ENCODE measurements at regions of chr3 and their contacts with region 1.

Region 1: DNA sequence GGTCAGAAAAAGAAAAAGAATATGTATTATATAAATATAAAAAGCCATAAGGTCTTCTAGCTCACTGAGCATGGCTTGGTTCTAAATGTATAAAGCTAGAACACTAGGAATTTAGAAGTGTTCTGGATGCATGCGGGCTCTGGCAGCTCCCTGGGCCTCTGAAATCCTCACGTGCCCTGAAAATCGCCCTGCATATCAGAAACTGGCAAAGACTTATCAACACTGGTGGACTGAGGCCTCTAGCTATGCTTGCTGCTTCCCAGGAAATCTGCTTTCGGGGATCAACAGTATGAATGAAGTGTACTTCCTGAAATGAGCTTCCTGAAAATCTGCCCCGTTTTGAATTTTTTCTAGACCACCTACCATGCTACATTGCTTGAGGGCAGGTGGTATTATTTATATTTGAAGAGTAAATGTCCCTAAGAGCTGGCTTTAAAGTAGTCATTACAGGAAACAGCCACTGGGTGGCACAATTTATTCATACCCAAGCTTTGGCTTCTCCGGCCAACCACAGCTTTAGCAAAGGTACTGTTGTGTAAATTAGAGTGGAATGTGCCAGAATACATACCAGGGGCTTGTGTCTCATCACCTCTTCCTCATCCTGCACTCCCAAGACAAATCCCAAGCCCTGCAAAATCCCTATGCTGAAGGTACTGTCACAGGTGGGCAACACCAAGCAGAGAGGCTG is 17.7 kb downstream of the CRTAP start:
- DNase-seq: no peak
- H3K4me3 ChIP-seq: no peak overlapping the region
- H3K27ac ChIP-seq: no peak overlapping the region
- H3K4me1 ChIP-seq: peaks cover 0 to 6% (median 0%) of the 10 kb centered on the region in 6 donors
- H3K27me3 ChIP-seq: no peaks in the 10 kb centered on the region
- CTCF ChIP-seq: peak in 10 of 11 experiments; percentile 35 to 80 (median 69)
- POLR2A ChIP-seq: no peak

Region 2: GRCh38 chr3:33287672-33288282 is 156.3 kb after region 1 on chr3:
- intact Hi-C with region 1: no loop called
- DNase-seq: no peak
- H3K4me3 ChIP-seq: no peak overlapping the region
- H3K27ac ChIP-seq: no peak overlapping the region
- H3K4me1 ChIP-seq: no peaks in the 10 kb centered on the region
- H3K27me3 ChIP-seq: peaks cover 0 to 10% (median 0%) of the 10 kb centered on the region in 7 donors
- CTCF ChIP-seq: no peak
- POLR2A ChIP-seq: no peak

Region 3: DNA sequence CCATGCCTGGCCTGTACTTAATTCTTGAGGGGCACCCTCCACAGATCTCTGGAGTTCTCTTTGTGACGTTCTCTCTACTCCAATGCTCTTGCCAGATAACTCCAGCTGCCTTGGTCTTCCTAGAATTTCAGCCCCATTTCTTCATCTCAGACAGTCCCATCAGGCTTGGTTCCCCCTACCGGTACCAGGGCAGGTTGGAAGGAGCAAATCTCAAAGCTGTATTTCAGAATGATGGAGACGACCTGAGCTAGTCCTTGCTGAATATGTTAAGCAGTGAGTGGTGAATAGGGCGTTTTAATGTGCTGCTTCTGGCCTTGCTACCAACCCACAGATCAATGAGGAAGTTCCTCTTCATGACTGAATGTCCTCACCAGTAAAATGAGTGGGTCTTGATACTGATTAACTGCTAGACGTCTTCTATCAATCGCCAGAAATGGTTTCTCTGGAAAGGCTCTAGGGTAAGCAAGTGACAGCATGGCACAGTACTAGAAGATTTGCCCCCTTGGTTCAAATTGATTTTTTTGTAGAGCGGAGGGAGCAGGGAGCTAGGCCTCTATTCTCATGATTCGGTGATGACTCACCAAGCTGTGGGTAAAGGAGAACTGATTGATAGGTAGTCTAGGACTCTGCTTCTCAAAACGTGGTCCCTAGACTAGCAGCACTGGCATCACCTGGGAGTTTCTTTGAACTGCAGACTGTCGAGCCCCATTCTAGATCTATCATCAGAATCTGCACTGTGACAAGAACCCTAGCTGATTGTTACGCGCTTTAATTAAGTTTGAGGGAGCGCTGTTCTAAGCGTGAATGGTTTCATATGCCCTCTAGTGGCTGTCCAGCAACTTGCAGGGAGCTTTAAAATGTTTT is 241.0 kb after region 1 on chr3:
- intact Hi-C with region 1: loop called (anchors 5 kb)
- DNase-seq: no peak
- H3K4me3 ChIP-seq: peak overlapping the region in 1 of 8 donors; percentile 19
- H3K27ac ChIP-seq: no peak overlapping the region
- H3K4me1 ChIP-seq: peaks cover 0 to 9% (median 6%) of the 10 kb centered on the region in 6 donors
- H3K27me3 ChIP-seq: no peaks in the 10 kb centered on the region
- CTCF ChIP-seq: peak; percentile 65 to 86 (median 80)
- POLR2A ChIP-seq: no peak

Region 4: GRCh38 chr3:33787328-33788009 is 656.0 kb after region 1 on chr3:
- intact Hi-C with region 1: loop called (anchors 10 kb)
- DNase-seq: no peak
- H3K4me3 ChIP-seq: peak overlapping the region in 2 of 8 donors; percentile 13 to 45
- H3K27ac ChIP-seq: no peak overlapping the region
- H3K4me1 ChIP-seq: peaks cover 0 to 12% (median 4%) of the 10 kb centered on the region in 6 donors
- H3K27me3 ChIP-seq: peaks cover 0 to 13% (median 0%) of the 10 kb centered on the region in 7 donors
- CTCF ChIP-seq: peak in 10 of 11 experiments; percentile 52 to 81 (median 74)
- POLR2A ChIP-seq: no peak

Measured in spleen (tissue), 13 donors.